ENCODE measurements at regions of chr9 and their contacts with region 1.

Region 1: GRCh38 chr9:136671646-136672430 is 9.1 kb downstream of the EGFL7 start:
- DNase-seq: no peak
- ATAC-seq: peak; percentile 77
- H3K4me3 ChIP-seq: no peak overlapping the region
- H3K27ac ChIP-seq: no peak overlapping the region
- H3K4me1 ChIP-seq: no peaks in the 10 kb centered on the region
- H3K27me3 ChIP-seq: peaks cover 0 to 2% of the 10 kb centered on the region in 2 experiments; a peak in 1 of 4 replicates
- CTCF ChIP-seq: peak; percentile 70 to 95 (median 78)
- EP300 ChIP-seq: no peak
- POLR2A ChIP-seq: no peak
- RAD21 ChIP-seq: peak; percentile 44; the same call in 1 of the 2 replicates

Region 2: DNA sequence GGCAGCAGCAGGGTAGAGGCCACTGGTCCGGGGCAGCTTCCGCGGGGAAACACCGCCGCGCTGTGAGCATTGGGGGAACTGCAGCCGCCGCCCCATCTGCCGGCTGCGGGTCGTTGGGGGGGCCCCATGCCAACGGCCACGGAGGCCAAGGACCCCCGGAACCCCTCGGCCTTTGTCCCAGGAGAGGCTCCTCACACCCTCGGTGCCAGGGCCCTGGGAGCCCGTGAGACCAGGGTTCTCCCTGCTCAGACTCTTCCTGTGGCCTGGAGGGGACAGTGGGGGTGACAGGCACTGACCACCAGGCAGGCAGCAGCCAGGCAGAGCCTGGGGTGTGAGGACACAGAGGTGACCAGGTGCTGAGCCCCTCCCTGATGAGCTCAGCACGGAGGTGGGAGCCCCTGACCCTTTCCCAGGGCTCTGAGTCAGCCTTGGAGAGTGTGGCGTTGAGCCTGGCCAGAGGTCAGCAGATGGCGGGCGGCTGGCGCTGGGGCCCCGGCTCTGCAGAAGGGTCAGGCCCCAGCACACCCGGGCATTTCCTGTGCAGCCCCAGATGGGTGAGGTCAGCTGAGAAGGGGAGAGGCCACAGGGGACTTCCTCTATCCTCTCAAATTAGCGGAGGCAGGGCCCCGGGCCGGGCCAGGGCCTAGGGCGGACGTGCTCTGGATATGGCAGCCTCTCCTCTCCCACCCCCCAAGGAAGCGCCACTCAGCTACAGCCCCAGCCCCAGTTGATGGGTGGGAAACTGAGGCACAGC is 27.1 kb before region 1 on chr9:
- CTCF ChIA-PET with region 1: interaction called, 10 read pairs
- POLR2A ChIA-PET with region 1: no interaction called
- RAD21 ChIA-PET with region 1: no interaction called
- SMC1A ChIA-PET with region 1: no interaction called
- in situ Hi-C with region 1: no loop called
- intact Hi-C with region 1: no loop called
- DNase-seq: no peak
- ATAC-seq: peak; percentile 96
- H3K4me3 ChIP-seq: no peak overlapping the region; the same call in 1 of the 2 replicates
- H3K27ac ChIP-seq: no peak overlapping the region
- H3K4me1 ChIP-seq: peaks cover 12% of the 10 kb centered on the region
- H3K27me3 ChIP-seq: peaks cover 0 to 5% of the 10 kb centered on the region in 2 experiments; a peak in 3 of 4 replicates
- CTCF ChIP-seq: peak; percentile 81 to 97 (median 85)
- EP300 ChIP-seq: no peak
- POLR2A ChIP-seq: no peak
- RAD21 ChIP-seq: peak; percentile 42

Region 3: DNA sequence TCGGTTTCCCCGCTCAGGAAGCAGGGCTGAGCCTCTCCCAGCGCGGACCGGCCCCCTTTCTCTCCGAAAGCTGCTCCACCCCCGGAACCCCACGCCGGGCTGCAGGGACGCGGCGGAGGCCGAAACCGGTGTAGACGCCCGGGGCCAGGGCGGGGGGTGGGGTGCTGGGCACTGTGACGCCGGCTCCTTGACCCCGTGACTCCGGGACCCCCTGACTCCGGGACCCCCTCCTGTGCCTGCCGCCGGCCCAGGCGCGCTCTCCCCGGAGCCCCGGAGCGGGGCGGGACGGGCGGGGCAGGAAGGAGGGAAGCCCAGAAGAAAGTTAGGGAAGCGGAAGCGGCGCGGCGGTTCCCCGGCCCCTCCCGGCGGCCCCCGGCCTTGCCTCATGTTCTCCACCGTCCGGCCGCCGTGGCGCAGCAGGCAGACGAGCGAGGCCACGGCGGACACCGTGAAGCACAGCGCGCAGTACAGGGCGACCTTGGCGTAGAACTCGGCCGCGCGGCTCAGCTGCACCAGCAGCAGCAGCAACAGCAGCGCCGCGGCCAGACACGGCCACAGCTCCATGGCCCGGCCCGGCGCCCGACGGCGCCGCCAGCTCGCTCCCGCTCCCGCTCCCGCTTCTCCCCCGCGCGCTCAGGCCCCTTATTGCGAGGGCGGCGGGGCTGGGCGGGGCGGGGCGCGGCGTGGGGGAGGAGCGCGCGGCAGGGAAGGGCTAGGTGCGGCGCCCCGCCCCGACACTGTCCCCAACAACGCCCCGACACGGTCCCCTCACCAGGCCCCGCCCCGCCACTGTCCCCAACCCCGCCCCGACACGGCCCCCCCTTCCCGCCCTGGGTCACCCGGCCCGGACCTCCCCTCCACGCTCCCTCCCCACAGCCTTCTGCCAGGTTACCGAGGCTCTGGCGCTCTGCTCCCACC is 15.2 kb after region 1 on chr9 and contains the start of gene AGPAT2:
- CTCF ChIA-PET with region 1: interaction called, 13 read pairs
- POLR2A ChIA-PET with region 1: interaction called, 3 read pairs
- RAD21 ChIA-PET with region 1: interaction called, 4 read pairs
- SMC1A ChIA-PET with region 1: no interaction called
- in situ Hi-C with region 1: no loop called
- intact Hi-C with region 1: no loop called
- DNase-seq: no peak
- ATAC-seq: peak; percentile 92
- H3K4me3 ChIP-seq: peak within 1 kb of the TSS; percentile 99
- H3K27ac ChIP-seq: peak within 1 kb of the TSS; percentile 55
- H3K4me1 ChIP-seq: peaks cover 16% of the 10 kb centered on the region
- H3K27me3 ChIP-seq: no peaks in the 10 kb centered on the region
- CTCF ChIP-seq: no peak
- EP300 ChIP-seq: no peak
- POLR2A ChIP-seq: peak; percentile 75
- RAD21 ChIP-seq: no peak
- polyA plus RNA-seq, gene AGPAT2: 0.10 to 0.47 TPM

Region 4: DNA sequence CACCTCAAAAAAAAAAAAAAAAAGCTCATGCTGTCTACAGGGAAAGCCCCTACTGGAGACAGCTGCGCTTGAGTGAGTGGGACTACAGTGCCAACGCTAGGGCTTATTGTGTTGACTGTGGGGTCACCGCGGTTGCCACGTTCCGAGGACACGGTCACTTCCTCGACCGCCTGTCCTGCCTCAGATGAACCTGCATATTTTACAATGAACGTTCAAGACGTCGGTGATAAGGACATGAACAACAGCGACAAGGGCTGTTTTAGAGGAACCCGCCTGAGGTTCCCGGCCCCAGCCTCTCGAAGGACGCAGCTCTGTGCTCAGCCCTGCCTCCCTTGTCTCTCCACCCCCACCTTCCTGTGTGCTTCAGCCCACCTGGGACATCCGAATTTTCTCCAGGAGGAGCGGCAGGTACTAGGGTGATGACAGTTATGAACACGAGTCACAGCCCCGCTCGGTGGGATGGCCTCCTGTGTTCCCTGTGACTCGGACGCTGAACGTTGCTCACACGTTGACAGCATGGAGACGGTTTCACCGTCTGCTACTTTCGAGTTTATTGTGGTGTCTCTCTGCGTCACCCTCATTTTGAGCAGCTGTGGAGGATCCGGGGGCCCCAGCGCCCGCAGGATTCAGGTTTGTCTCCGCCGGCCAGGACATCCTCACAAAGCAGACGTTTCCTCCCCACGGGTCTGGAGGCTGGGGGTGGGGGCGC is 29.3 kb after region 1 on chr9:
- CTCF ChIA-PET with region 1: interaction called, 12 read pairs
- POLR2A ChIA-PET with region 1: interaction called, 3 read pairs
- RAD21 ChIA-PET with region 1: no interaction called
- SMC1A ChIA-PET with region 1: no interaction called
- in situ Hi-C with region 1: no loop called
- intact Hi-C with region 1: no loop called
- DNase-seq: peak; percentile 43
- ATAC-seq: peak; percentile 92
- H3K4me3 ChIP-seq: peak overlapping the region; percentile 48
- H3K27ac ChIP-seq: peak overlapping the region; percentile 77
- H3K4me1 ChIP-seq: peaks cover 24% of the 10 kb centered on the region
- H3K27me3 ChIP-seq: no peaks in the 10 kb centered on the region; a peak in 1 of 4 replicates
- CTCF ChIP-seq: no peak
- EP300 ChIP-seq: peak; percentile 63 to 76; a peak in 3 of 4 replicates
- POLR2A ChIP-seq: peak; percentile 82
- RAD21 ChIP-seq: no peak

Region 5: DNA sequence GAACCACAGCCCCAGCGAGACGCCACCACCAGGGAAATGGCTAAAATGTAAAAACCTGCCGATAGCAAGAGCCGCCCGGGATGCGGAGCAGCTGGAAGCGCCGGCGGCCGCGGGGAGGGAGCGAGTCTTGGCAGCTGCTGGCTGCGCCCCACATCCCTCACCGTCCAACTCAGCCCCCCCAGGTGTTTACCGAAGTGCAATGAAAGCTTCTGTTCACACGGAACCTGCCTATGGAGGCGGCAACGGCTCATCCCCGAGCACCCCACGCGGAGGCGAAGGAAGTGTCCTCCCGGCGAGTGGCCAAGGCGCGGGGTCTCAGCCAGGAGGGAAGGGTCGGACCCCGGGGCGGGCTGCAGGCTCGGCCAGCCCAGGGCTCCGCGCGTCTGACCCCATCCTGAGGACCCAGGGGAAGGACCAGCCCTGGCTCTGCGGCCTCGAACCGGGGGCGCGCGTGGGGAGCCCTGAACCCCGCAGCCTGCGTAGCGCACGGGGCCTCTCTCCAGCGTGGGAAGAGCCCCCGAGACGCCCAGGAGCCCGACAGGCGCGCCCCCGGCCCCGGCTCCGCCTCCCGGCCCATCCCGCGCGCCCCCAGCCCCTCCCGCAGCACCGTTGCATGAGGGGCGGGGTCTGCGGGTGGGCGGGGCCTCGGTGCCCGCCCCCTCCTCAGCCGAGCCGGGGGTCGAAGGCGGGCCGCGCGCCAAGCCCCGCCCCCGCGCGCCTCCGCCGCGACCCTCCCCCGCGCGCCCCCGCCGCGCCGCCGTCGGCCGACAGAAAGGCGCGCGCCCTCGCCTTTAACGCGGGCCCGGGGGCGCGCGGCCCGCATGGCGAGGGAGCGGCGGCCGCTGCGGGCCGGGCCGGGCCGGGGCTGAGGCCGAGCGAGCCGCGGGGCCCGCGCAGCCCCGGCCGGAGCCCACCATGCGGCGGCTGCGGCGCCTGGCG is 40.2 kb after region 1 on chr9 and contains the start of gene DIPK1B:
- CTCF ChIA-PET with region 1: no interaction called
- POLR2A ChIA-PET with region 1: no interaction called
- RAD21 ChIA-PET with region 1: no interaction called
- SMC1A ChIA-PET with region 1: no interaction called
- in situ Hi-C with region 1: no loop called
- intact Hi-C with region 1: no loop called
- DNase-seq: no peak
- ATAC-seq: no peak
- H3K4me3 ChIP-seq: no peak within 1 kb of the TSS
- H3K27ac ChIP-seq: no peak within 1 kb of the TSS
- H3K4me1 ChIP-seq: no peaks in the 10 kb centered on the region
- H3K27me3 ChIP-seq: peaks cover 2 to 7% of the 10 kb centered on the region in 2 experiments
- CTCF ChIP-seq: no peak
- EP300 ChIP-seq: no peak
- POLR2A ChIP-seq: no peak
- RAD21 ChIP-seq: no peak
- polyA plus RNA-seq, gene DIPK1B: not detected